ENCODE measurements at regions of chr17 and their contacts with region 1.

Region 1: GRCh38 chr17:385926-386876 is 33.6 kb upstream of the RPH3AL start:
- DNase-seq: peak; percentile 78 to 93 (median 83)
- ATAC-seq: peak in 3 of 4 donors; percentile 70 to 82 (median 79)
- H3K4me3 ChIP-seq: peak overlapping the region; percentile 29 to 70 (median 58)
- H3K27ac ChIP-seq: peak overlapping the region; percentile 73 to 94 (median 88)
- H3K4me1 ChIP-seq: peaks cover 0 to 28% (median 19%) of the 10 kb centered on the region in 12 donors
- H3K27me3 ChIP-seq: peaks cover 0 to 16% (median 0%) of the 10 kb centered on the region in 9 donors
- CTCF ChIP-seq: peak; percentile 47 to 91 (median 76)
- POLR2A ChIP-seq: no peak

Region 2: GRCh38 chr17:143782-144281 is 242.4 kb before region 1 on chr17:
- intact Hi-C with region 1: loop called in 8 of 10 experiments (anchors 2 to 5 kb)
- DNase-seq: peak; percentile 81 to 92 (median 81)
- ATAC-seq: peak in 3 of 4 donors; percentile 82 to 89 (median 88)
- H3K4me3 ChIP-seq: no peak overlapping the region
- H3K27ac ChIP-seq: no peak overlapping the region
- H3K4me1 ChIP-seq: peaks cover 0 to 7% (median 1%) of the 10 kb centered on the region in 12 donors
- H3K27me3 ChIP-seq: peaks cover 0 to 3% (median 0%) of the 10 kb centered on the region in 9 donors
- CTCF ChIP-seq: peak; percentile 88 to 98 (median 94)
- POLR2A ChIP-seq: no peak

Region 3: GRCh38 chr17:164303-165235 is 221.6 kb before region 1 on chr17:
- intact Hi-C with region 1: loop called in 4 of 10 experiments (anchors 5 kb)
- DNase-seq: peak in 2 of 5 donors; percentile 49 to 54
- ATAC-seq: peak in 3 of 4 donors; percentile 68 to 82 (median 74)
- H3K4me3 ChIP-seq: no peak overlapping the region
- H3K27ac ChIP-seq: no peak overlapping the region
- H3K4me1 ChIP-seq: no peaks in the 10 kb centered on the region
- H3K27me3 ChIP-seq: no peaks in the 10 kb centered on the region
- CTCF ChIP-seq: peak; percentile 32 to 67 (median 56)
- POLR2A ChIP-seq: no peak

Region 4: DNA sequence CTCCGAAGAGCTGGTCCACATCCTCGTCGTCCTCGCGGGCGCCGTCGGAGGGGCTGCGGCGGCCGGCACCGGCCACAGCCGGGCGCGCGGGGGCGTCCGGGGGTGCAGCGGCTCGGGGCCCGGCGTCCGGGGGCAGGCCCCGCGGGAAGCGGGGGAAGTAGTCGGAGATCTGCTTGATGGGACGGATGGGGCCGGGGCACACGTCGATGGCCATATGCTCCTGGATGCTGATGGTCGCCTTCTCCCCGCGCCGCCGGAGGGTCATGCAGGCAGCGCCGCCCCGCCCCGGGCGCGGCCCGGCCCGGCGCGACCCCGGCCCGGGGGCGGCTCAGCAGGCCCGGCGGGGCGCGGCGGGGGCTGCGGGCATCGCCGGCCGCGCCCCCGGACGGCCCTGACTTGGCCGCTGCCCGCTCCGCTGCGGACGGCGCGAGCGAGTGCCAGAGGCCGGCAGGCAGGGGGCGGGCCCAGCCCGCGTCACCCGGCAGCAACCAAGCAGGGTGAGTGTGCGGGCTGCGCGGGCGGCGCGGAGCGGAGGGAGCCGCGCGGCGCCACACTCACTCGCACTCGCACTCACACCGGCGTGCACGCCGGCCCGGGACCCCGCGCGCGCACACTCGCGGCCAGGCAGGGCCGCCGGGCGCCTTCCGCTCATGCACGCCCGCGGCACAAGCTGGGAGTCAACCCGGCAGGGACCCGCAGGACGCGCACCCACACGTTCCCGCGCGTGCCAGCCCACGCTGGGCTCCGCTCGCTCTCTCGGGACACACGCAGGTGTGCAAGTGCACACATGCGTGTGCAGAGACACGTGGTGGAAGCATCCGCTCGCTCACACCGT is 204.8 kb before region 1 on chr17 and contains the start of gene DOC2B:
- intact Hi-C with region 1: loop called in 1 of 10 experiments (anchors 5 kb)
- DNase-seq: peak; percentile 52 to 80 (median 66)
- ATAC-seq: peak; percentile 52 to 83 (median 74)
- H3K4me3 ChIP-seq: peak within 1 kb of the TSS; percentile 50 to 75 (median 64)
- H3K27ac ChIP-seq: peak within 1 kb of the TSS; percentile 57 to 92 (median 84)
- H3K4me1 ChIP-seq: peaks cover 0 to 37% (median 16%) of the 10 kb centered on the region in 12 donors
- H3K27me3 ChIP-seq: peaks cover 0 to 45% (median 25%) of the 10 kb centered on the region in 9 donors
- CTCF ChIP-seq: peak in 1 of 12 donors; percentile 15
- POLR2A ChIP-seq: no peak
- total RNA-seq, gene DOC2B: 1.7 to 13.0 (median 6.3) TPM

Region 5: GRCh38 chr17:309361-309888 is 76.8 kb before region 1 on chr17:
- intact Hi-C with region 1: loop called in 2 of 10 experiments (anchors 5 to 10 kb)
- DNase-seq: peak in 3 of 5 donors; percentile 25 to 59 (median 26)
- ATAC-seq: peak in 2 of 4 donors; percentile 40 to 58
- H3K4me3 ChIP-seq: no peak overlapping the region
- H3K27ac ChIP-seq: peak overlapping the region in 1 of 12 donors; percentile 9
- H3K4me1 ChIP-seq: peaks cover 0 to 13% (median under 1%) of the 10 kb centered on the region in 12 donors
- H3K27me3 ChIP-seq: no peaks in the 10 kb centered on the region
- CTCF ChIP-seq: peak; percentile 38 to 69 (median 51)
- POLR2A ChIP-seq: no peak

Region 6: GRCh38 chr17:333626-334396 is 52.4 kb before region 1 on chr17:
- intact Hi-C with region 1: loop called in 6 of 10 experiments (anchors 1 to 10 kb)
- DNase-seq: peak; percentile 83 to 91 (median 88)
- ATAC-seq: peak; percentile 81 to 87 (median 84)
- H3K4me3 ChIP-seq: peak overlapping the region in 11 of 12 donors; percentile 17 to 67 (median 55)
- H3K27ac ChIP-seq: peak overlapping the region; percentile 81 to 99 (median 92)
- H3K4me1 ChIP-seq: peaks cover 0 to 50% (median 26%) of the 10 kb centered on the region in 12 donors
- H3K27me3 ChIP-seq: peaks cover 0 to 10% (median 0%) of the 10 kb centered on the region in 9 donors
- CTCF ChIP-seq: no peak
- POLR2A ChIP-seq: peak in 1 of 2 donors; percentile 85

Region 7: DNA sequence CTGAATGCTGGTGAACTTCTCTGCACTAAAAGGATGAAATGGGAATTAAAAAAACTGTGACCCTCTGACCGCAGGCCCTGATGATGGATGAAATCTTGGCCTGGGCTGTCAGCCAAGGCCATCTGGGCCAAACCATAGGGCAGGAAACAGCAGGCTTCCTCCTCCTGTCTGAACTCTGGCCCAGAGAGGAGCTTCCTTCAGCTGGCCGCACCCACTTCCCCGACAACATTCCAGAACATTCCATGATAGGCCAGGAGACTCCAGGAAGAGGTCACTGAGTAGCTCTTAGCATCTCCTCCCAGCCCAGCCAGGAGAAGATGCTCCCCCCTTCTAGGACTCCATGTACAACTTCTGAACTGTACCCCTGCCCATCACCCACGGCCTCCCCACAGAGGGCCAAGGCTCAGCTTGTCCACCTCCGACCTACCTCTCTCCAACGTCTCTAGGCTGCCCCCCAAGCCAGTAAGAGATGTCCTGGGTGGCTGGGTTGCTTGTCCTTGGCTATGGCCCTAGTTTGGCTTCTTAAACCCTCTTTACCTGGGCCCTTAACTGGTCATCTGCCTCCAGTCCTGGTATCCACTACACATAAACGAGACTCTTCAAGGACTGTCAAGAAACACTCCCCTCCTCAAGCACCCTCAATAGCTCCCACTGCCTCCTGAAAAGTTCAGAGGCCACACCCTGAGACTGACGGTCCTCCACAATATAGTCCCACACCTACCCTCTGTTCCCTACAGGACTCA is 35.3 kb before region 1 on chr17:
- intact Hi-C with region 1: loop called in 2 of 10 experiments (anchors 2 to 5 kb)
- DNase-seq: peak; percentile 87 to 94 (median 91)
- ATAC-seq: peak; percentile 85 to 92 (median 88)
- H3K4me3 ChIP-seq: no peak overlapping the region
- H3K27ac ChIP-seq: peak overlapping the region; percentile 76 to 97 (median 92)
- H3K4me1 ChIP-seq: peaks cover 14 to 61% (median 50%) of the 10 kb centered on the region in 12 donors
- H3K27me3 ChIP-seq: no peaks in the 10 kb centered on the region
- CTCF ChIP-seq: no peak
- POLR2A ChIP-seq: peak in 1 of 2 donors; percentile 35

Region 8: DNA sequence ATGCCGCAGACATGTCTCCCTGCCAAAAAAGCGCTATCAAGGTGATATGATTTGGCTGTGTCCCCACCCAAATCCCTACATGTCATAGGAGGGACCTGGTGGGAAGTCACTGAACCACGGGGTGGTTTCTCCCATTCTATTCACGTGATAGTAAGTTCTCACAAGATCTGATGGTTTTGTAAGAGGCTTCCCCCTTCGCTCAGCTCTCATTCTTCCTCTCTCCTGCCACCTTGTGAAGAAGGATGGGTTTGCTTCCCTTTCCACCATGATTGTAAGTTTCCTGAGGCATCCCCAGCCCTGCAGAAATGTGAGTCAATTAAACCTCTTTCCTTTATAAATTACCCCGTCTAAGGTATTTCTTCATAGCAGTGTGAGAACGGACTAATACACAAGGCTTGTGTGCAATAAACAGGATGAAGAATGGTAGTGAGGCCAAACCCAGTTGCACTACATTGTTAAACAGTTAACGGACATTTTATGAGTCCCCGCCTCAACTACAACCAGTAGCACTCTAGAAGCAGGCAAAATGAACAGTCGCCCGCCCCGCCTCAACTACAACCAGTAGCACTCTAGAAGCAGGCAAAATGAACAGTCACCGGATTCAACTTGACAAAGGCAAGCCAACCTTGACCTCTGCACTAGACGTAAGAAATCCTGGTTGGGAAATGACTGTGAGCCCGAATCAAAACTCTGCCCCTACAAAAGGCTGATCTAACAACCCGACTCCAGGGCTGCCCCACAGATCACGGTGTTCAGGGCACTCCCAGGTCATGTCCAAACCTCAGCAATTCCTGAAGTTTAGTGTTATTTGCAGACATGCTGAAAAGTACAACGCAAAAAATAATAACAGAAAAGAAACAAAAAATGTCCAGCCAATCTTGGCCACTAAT is 302.1 kb after region 1 on chr17:
- intact Hi-C with region 1: no loop called
- DNase-seq: no peak
- ATAC-seq: peak in 2 of 4 donors; percentile 26 to 41
- H3K4me3 ChIP-seq: no peak overlapping the region
- H3K27ac ChIP-seq: no peak overlapping the region
- H3K4me1 ChIP-seq: peaks cover 0 to 4% (median 0%) of the 10 kb centered on the region in 12 donors
- H3K27me3 ChIP-seq: no peaks in the 10 kb centered on the region
- CTCF ChIP-seq: peak in 9 of 12 donors; percentile 16 to 51 (median 27)
- POLR2A ChIP-seq: no peak